ENCODE measurements at regions of chr17 and their contacts with region 1.

Region 1: DNA sequence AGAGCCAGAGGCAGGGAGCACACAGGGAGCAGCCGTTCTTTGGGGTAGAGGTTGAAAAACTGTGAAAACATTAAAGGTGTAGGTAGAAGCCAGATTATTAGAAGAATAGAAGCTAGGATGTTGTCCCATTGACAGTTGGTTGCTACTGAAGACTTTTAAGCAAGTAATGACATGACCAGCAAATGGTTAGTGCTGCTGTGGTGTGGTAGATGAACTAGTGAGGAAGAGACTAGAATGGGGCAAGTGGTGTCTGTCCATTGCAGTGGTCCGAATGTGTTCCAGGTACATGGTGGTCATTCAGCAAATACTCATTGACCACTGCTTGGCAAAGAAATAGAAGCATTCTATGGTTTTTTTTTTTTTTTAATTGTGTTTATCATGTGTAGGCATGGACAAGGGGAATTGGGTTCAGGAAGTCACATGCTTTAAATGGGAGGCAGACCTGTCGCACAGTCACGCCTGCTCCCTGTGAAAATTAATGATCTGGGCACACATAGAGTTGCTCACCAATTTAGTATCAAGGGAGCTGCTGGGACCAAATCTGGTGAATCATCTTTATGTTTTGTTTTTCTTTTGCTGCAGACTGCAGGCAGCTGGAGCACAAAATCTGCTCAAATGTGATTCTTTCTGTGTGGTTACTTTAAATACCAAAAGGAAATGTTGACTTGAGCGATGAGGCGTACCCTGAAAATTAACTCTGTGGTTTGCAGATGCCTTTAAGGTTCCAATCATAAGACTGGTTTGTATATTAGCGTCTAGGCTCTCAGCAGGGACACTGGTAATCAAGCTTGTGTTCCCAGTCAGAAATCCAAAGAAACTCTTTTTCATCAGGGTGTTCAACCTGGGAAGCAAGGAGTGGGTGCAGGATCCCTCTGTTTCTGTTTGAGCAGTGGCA is 30.7 kb downstream of the YPEL2 start:
- DNase-seq: peak; percentile 40
- H3K4me3 Mint-ChIP-seq: peak overlapping the region; percentile 66
- H3K27ac Mint-ChIP-seq: peak overlapping the region; percentile 93
- H3K4me1 Mint-ChIP-seq: peaks cover 62% of the 10 kb centered on the region
- H3K27me3 Mint-ChIP-seq: no peaks in the 10 kb centered on the region

Region 2: GRCh38 chr17:59311130-59311920 is 50.8 kb before region 1 on chr17:
- intact Hi-C with region 1: loop called (anchors 2 kb)
- DNase-seq: peak; percentile 40
- H3K4me3 Mint-ChIP-seq: no peak overlapping the region
- H3K27ac Mint-ChIP-seq: no peak overlapping the region
- H3K4me1 Mint-ChIP-seq: peaks cover 8% of the 10 kb centered on the region
- H3K27me3 Mint-ChIP-seq: no peaks in the 10 kb centered on the region

Region 3: DNA sequence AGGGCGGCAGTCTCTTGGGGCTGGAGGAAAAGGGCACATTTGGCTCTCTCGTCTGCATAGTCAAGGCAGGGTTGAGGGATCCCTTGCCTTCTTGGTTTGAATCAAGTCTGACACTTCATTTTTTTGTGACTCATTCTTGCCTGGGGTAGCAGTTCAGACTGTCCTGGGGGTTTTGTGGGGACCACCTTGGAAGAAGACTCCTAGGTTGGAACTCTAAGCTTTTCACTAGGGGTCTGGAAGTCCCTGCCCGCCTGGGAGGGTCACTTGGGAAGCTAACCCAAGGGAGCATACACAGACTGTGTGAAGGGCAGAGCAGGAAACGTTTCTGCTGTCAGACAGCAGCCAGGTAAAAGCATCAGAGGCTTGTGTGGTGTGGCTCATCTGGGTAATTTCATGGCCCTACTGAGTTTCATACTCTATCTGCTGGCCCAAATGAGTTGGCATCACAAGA is 19.5 kb before region 1 on chr17:
- intact Hi-C with region 1: loop called (anchors 2 kb)
- DNase-seq: no peak
- H3K4me3 Mint-ChIP-seq: no peak overlapping the region
- H3K27ac Mint-ChIP-seq: peak overlapping the region; percentile 26
- H3K4me1 Mint-ChIP-seq: peaks cover 30% of the 10 kb centered on the region
- H3K27me3 Mint-ChIP-seq: peaks cover 3% of the 10 kb centered on the region

Region 4: DNA sequence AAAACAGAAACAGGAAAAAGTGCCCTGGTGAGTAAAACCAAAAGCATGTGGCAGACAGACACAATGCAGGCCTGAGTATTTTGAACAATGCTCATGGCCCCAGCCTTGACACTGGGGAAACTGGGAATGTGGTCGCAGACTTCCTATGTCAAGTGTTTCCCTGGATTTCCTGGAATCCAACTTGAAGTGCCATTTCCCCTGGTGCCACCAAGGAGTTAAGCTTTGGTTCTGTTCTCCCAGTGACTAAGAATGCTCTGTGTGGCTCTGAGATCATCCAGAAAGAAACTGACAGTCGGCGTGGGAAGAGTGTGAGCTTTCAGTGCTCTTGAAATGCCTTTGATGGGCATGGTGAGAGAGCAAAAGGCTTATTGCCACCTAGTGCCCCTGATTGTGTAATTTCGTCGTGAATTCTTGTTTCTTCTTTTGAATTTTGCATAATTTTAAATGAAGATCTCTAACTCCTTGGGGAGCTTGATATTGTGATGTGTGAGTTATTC is 65.3 kb after region 1 on chr17:
- intact Hi-C with region 1: loop called (anchors 2 kb)
- DNase-seq: no peak
- H3K4me3 Mint-ChIP-seq: no peak overlapping the region
- H3K27ac Mint-ChIP-seq: no peak overlapping the region
- H3K4me1 Mint-ChIP-seq: peaks cover 25% of the 10 kb centered on the region
- H3K27me3 Mint-ChIP-seq: no peaks in the 10 kb centered on the region

Region 5: DNA sequence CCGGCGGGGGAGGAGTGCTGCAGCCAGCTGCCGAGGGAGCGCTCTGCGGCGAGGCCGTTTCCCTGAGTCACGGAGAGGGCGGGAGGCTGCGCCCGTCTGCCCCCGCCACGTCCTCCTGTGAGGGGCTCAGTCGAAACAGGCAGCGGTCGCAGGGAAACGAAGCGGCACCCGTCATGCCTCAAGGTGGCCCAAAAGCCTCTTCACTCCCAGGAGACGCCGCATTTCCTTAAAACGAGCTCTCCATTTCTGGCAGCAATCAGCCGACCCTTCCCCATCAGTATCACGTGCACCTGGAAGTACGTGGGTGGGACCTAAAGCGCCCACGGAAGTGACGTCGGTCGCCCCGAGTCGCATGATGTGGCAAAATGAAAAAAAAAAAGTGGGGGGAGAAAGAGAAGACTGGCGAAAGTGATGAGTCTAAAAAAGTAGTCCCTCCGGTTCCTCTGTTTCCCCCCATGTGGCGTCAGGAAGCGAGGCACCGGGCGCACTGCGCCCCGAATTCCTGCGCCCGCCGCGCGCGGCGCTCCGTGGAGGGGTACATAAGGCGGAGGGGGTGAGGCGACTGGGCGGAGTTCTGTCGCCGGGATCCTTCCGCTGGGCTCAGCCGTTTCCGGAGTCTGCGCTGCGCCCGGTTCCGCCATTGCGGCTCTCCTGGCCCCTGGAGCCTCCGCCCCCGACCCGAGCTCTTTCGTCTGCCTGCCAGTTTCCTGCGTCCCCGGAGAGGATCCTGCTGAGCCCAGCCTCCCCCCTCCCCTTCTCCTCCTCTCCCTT is 257.3 kb after region 1 on chr17 and contains the start of gene CLTC:
- intact Hi-C with region 1: loop called (anchors 1 kb)
- DNase-seq: peak; percentile 90
- H3K4me3 Mint-ChIP-seq: peak within 1 kb of the TSS; percentile 97
- H3K27ac Mint-ChIP-seq: peak within 1 kb of the TSS; percentile 100
- H3K4me1 Mint-ChIP-seq: peaks cover 57% of the 10 kb centered on the region
- H3K27me3 Mint-ChIP-seq: no peaks in the 10 kb centered on the region
- total RNA-seq, gene CLTC: 176 and 186 TPM in 2 replicates